Activated CD4-positive, alpha-beta memory T cell treated with anti-CD3 and anti-CD28 coated beads for 36 hours (primary cell): ENCODE measurements at regions of chr3 and their contacts with region 1.

Region 1: DNA sequence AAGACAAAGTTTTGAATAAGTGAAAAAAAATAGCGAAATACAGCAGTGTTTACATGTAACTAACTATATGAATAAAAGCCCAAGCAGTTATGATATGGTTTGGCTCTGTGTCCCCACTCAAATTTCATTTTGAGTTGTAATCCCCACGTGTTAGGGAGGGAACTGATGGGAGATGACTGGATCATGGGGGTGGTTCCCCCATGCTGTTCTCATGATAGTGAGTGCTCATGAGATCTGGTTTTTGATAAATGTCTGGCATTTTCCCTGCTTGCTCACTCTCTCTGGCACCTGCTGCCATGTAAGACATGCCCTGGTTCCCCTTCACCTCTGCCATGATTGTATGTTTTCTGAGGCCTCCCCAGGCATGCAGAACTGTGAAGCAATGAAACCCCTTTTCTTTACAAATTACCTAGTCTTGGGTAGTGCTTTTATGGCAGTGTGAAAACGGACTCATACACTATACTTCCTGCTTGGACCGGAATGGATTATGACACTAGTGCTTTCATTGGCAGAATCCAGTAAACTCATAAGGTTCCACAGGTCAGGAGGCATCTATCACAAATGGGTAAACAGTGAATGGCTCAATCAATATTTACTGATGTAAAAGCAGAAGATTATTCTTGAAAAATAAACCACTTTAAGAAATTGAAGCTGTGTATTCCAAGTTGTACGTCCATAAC is 192.1 kb downstream of the CBLB start:
- DNase-seq: peak; percentile 77
- H3K4me3 Mint-ChIP-seq: no peak overlapping the region
- H3K27ac Mint-ChIP-seq: peak overlapping the region; percentile 86
- H3K4me1 Mint-ChIP-seq: peaks cover 9% of the 10 kb centered on the region
- H3K27me3 Mint-ChIP-seq: no peaks in the 10 kb centered on the region

Region 2: DNA sequence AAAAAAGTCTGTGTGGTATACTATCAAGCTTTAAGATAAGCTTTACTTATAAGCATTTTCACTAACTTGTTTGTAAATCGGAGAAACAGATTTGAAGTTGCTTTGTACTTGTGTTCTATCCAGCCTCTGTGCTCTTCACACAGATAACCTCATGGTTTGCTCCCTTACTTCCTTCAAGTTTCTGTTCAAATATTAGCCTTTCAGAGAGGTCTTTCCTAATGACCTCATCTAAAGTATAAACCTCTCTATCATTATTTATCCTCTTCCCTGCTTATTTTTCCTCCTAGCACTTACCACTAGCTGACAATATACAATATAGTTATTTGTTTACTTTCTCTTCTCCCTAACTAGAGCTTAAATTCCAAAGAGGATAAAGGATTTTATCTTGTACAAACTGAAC is 12.1 kb after region 1 on chr3:
- CTCF ChIA-PET with region 1: no interaction called
- POLR2A ChIA-PET with region 1: no interaction called
- intact Hi-C with region 1: no loop called
- DNase-seq: no peak
- H3K4me3 Mint-ChIP-seq: no peak overlapping the region
- H3K27ac Mint-ChIP-seq: no peak overlapping the region
- H3K4me1 Mint-ChIP-seq: peaks cover 33% of the 10 kb centered on the region
- H3K27me3 Mint-ChIP-seq: no peaks in the 10 kb centered on the region

Region 3: DNA sequence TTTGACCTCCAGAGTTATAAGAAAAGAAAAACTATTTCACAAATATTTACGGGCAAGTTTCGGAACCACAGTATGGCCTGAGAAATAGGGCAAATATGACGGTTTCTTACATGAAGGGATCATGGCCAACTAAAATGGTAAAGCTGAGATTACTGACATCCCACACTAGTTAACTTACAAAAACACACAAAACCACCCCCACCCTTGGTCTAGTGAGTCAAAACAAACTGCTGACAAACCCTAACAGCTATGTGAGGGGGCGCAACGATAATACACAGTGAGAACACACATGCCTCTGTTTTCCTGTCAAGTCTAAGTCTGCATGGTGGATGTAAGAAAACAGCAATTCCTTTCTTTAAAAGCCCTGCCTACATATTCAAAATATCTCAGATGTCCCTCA is 159.8 kb after region 1 on chr3:
- CTCF ChIA-PET with region 1: no interaction called
- POLR2A ChIA-PET with region 1: no interaction called
- intact Hi-C with region 1: loop called (anchors 1 kb)
- DNase-seq: peak; percentile 78
- H3K4me3 Mint-ChIP-seq: peak overlapping the region; percentile 58
- H3K27ac Mint-ChIP-seq: peak overlapping the region; percentile 80
- H3K4me1 Mint-ChIP-seq: peaks cover 74% of the 10 kb centered on the region
- H3K27me3 Mint-ChIP-seq: no peaks in the 10 kb centered on the region

Region 4: GRCh38 chr3:106299300-106300098 is 622.7 kb after region 1 on chr3:
- CTCF ChIA-PET with region 1: no interaction called
- POLR2A ChIA-PET with region 1: no interaction called
- intact Hi-C with region 1: loop called (anchors 1 kb)
- DNase-seq: peak; percentile 30
- H3K4me3 Mint-ChIP-seq: no peak overlapping the region
- H3K27ac Mint-ChIP-seq: peak overlapping the region; percentile 53
- H3K4me1 Mint-ChIP-seq: peaks cover 50% of the 10 kb centered on the region
- H3K27me3 Mint-ChIP-seq: no peaks in the 10 kb centered on the region